ENCODE measurements at regions of chr11 and their contacts with region 1.

Region 1: GRCh38 chr11:9861860-9862725 is 198.2 kb downstream of the SWAP70 start:
- DNase-seq: peak; percentile 34
- H3K4me3 ChIP-seq: no peak overlapping the region
- H3K27ac ChIP-seq: no peak overlapping the region
- H3K4me1 ChIP-seq: peaks cover 4% of the 10 kb centered on the region
- H3K27me3 ChIP-seq: no peaks in the 10 kb centered on the region
- CTCF ChIP-seq: peak in 3 of 4 experiments; percentile 42 to 55 (median 51)
- POLR2A ChIP-seq: no peak

Region 2: DNA sequence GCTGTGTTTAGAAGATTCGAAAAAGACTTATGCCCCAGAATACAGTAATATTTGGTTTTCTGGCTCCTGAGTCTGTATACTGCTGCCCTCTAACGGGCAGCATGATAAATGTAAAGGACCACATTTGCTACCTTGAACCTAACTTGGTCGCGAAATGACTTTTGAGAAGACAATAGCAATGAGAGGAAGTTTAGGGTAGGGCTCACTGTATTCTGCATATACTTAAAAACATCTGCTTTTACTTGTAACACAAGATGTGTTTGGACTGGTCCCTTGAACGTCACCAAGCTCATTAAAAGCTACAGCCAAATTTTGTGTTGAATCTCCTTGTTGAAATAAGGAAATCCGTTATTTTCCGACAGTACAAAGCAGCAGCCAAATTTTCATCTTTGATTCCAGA is 110.9 kb after region 1 on chr11:
- intact Hi-C with region 1: loop called (anchors 10 kb)
- DNase-seq: peak; percentile 38
- H3K4me3 ChIP-seq: no peak overlapping the region
- H3K27ac ChIP-seq: no peak overlapping the region
- H3K4me1 ChIP-seq: no peaks in the 10 kb centered on the region
- H3K27me3 ChIP-seq: no peaks in the 10 kb centered on the region
- CTCF ChIP-seq: peak; percentile 23 to 86 (median 68)
- POLR2A ChIP-seq: no peak

Region 3: GRCh38 chr11:10322830-10323792 is 461.0 kb after region 1 on chr11:
- intact Hi-C with region 1: loop called (anchors 10 kb)
- DNase-seq: peak; percentile 46
- H3K4me3 ChIP-seq: no peak overlapping the region
- H3K27ac ChIP-seq: peak overlapping the region; percentile 15 to 37
- H3K4me1 ChIP-seq: no peaks in the 10 kb centered on the region
- H3K27me3 ChIP-seq: no peaks in the 10 kb centered on the region
- CTCF ChIP-seq: peak; percentile 24 to 79 (median 64)
- POLR2A ChIP-seq: no peak